Activated CD4-positive, alpha-beta memory T cell treated with anti-CD3 and anti-CD28 coated beads, Interleukin-2, amount 10 ng/mL, durations not matched to agents 7 days and 5 days (primary cell): ENCODE measurements at regions of chr11 and their contacts with region 1.

Region 1: GRCh38 chr11:75388386-75389275 is 10.7 kb upstream of the RPS3 start:
- DNase-seq: peak; percentile 80
- H3K4me3 Mint-ChIP-seq: no peak overlapping the region
- H3K27ac Mint-ChIP-seq: no peak overlapping the region
- H3K4me1 Mint-ChIP-seq: peaks cover 12% of the 10 kb centered on the region
- H3K27me3 Mint-ChIP-seq: peaks cover 12% of the 10 kb centered on the region

Region 2: GRCh38 chr11:75270896-75271418 is 117.7 kb before region 1 on chr11:
- CTCF ChIA-PET with region 1: interaction called, 339 read pairs
- POLR2A ChIA-PET with region 1: interaction called, 13 read pairs
- DNase-seq: peak; percentile 41
- H3K4me3 Mint-ChIP-seq: no peak overlapping the region
- H3K27ac Mint-ChIP-seq: no peak overlapping the region
- H3K4me1 Mint-ChIP-seq: peaks cover 23% of the 10 kb centered on the region
- H3K27me3 Mint-ChIP-seq: no peaks in the 10 kb centered on the region

Region 3: DNA sequence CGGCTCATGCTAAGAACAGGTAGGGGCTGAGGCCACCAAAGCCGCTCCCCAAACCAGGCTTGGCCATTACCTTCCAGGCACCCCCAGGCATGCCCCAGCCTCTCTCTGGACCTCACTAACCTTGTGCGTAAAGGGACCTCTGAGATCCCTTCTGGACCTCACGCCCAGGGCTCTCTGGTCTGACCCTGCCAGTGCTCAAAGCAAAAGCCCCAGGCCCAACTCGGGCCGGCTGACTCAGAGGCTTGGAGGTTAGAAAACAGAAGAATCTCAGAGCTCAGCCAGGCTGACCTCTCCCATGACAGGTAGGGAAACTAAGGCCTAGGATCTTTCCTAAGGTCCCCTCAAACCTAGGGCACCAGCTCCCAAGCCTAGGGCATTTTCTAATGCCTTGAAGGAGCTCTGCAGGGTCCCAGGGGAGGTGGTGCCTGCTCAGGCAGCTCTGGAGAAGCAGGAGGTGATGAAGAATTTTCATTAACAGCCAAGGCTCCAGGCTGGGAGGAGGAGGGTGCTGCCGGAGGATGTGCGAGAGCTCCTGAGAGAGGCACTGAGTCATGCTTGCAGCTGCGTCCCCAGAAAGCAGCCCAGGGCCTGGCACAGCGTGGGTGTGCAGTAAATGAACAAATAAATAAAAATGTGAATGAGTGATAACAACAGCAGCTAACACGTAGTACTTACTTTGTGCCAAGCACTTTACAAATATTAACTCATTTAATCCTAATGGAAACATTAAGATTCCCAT is 62.8 kb before region 1 on chr11:
- CTCF ChIA-PET with region 1: interaction called, 23 read pairs
- POLR2A ChIA-PET with region 1: interaction called, 7 read pairs
- DNase-seq: peak; percentile 44
- H3K4me3 Mint-ChIP-seq: no peak overlapping the region
- H3K27ac Mint-ChIP-seq: peak overlapping the region; percentile 64
- H3K4me1 Mint-ChIP-seq: peaks cover 47% of the 10 kb centered on the region
- H3K27me3 Mint-ChIP-seq: no peaks in the 10 kb centered on the region

Region 4: DNA sequence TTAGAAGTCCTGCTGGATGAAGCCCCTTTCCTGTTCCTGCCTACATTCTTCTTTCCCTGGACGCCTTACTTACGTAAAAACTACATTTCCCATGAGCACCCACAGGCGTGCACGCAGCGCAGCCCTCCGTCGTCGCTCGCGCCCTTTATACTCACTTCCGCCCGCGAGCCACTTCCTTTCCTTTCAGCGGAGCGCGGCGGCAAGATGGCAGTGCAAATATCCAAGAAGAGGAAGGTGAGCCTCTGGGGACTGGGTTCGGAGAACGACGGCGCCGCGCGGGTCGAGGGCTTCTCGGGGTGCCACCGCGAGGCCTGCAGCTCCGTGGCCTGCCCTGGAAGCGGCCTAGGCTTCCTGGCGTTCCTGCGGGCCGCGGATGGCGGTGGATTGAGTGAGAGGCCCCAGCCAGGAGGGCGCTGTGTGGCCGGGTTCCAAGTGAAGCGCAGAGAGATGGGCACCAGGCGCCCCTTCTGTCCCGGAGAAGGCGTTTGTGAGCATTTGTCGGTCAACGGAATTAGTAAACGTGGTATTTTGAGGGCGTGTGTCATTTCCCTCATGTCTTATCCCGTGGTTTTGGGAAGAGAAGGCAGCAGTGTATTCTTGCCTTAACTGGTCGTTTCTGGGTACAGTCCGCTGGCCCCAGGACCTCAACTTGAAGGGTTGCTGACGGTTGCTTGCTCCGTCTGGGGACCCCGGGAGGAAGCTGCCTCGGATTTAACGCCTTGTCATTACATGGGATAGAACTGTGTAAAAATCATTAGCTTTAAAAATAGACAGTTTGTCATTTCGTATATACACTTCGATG is 10.9 kb after region 1 on chr11 and contains the start of gene RPS3:
- CTCF ChIA-PET with region 1: interaction called, 27 read pairs
- POLR2A ChIA-PET with region 1: interaction called, 10 read pairs
- DNase-seq: peak; percentile 92
- H3K4me3 Mint-ChIP-seq: peak within 1 kb of the TSS; percentile 96
- H3K27ac Mint-ChIP-seq: peak within 1 kb of the TSS; percentile 98
- H3K4me1 Mint-ChIP-seq: peaks cover 46% of the 10 kb centered on the region
- H3K27me3 Mint-ChIP-seq: peaks cover 6% of the 10 kb centered on the region
- total RNA-seq, gene RPS3: 2,828 to 2,853 TPM

Region 5: GRCh38 chr11:75445315-75445953 is 56.8 kb after region 1 on chr11:
- CTCF ChIA-PET with region 1: interaction called, 16 read pairs
- POLR2A ChIA-PET with region 1: no interaction called
- DNase-seq: peak; percentile 73
- H3K4me3 Mint-ChIP-seq: no peak overlapping the region
- H3K27ac Mint-ChIP-seq: no peak overlapping the region
- H3K4me1 Mint-ChIP-seq: peaks cover 5% of the 10 kb centered on the region
- H3K27me3 Mint-ChIP-seq: no peaks in the 10 kb centered on the region